B cell (primary cell): ENCODE measurements at regions of chr1 and their contacts with region 1.

Region 1: GRCh38 chr1:28248283-28249012 is 10.9 kb upstream of the SESN2 start:
- DNase-seq: peak; percentile 86
- ATAC-seq: peak; percentile 16
- H3K4me3 ChIP-seq: peak overlapping the region in 4 of 5 experiments; percentile 15 to 45 (median 38)
- H3K4me3 Mint-ChIP-seq: peak overlapping the region; percentile 83
- H3K27ac ChIP-seq: peak overlapping the region; percentile 74 to 77
- H3K27ac Mint-ChIP-seq: peak overlapping the region; percentile 88
- H3K4me1 ChIP-seq: peaks cover 43 to 51% of the 10 kb centered on the region in 2 donors
- H3K4me1 Mint-ChIP-seq: peaks cover 49% of the 10 kb centered on the region
- H3K27me3 ChIP-seq: no peaks in the 10 kb centered on the region
- H3K27me3 Mint-ChIP-seq: no peaks in the 10 kb centered on the region
- CTCF ChIP-seq: peak; percentile 86

Region 2: GRCh38 chr1:28329395-28330153 is 81.1 kb after region 1 on chr1:
- CTCF ChIA-PET with region 1: interaction called, 53 read pairs
- POLR2A ChIA-PET with region 1: interaction called, 11 read pairs
- intact Hi-C with region 1: loop called (anchors 1 kb)
- DNase-seq: peak; percentile 67
- ATAC-seq: no peak
- H3K4me3 ChIP-seq: peak overlapping the region; percentile 72 to 93 (median 80)
- H3K4me3 Mint-ChIP-seq: peak overlapping the region; percentile 91
- H3K27ac ChIP-seq: peak overlapping the region; percentile 91 to 99
- H3K27ac Mint-ChIP-seq: peak overlapping the region; percentile 99
- H3K4me1 ChIP-seq: peaks cover 34 to 41% of the 10 kb centered on the region in 2 donors
- H3K4me1 Mint-ChIP-seq: peaks cover 45% of the 10 kb centered on the region
- H3K27me3 ChIP-seq: no peaks in the 10 kb centered on the region
- H3K27me3 Mint-ChIP-seq: no peaks in the 10 kb centered on the region
- CTCF ChIP-seq: no peak

Region 3: GRCh38 chr1:28412731-28413130 is 164.3 kb after region 1 on chr1:
- CTCF ChIA-PET with region 1: interaction called, 14 read pairs
- POLR2A ChIA-PET with region 1: no interaction called
- intact Hi-C with region 1: no loop called
- DNase-seq: no peak
- ATAC-seq: no peak
- H3K4me3 ChIP-seq: no peak overlapping the region
- H3K4me3 Mint-ChIP-seq: no peak overlapping the region
- H3K27ac ChIP-seq: no peak overlapping the region
- H3K27ac Mint-ChIP-seq: no peak overlapping the region
- H3K4me1 ChIP-seq: peaks cover 2 to 6% of the 10 kb centered on the region in 2 donors
- H3K4me1 Mint-ChIP-seq: peaks cover 13% of the 10 kb centered on the region
- H3K27me3 ChIP-seq: no peaks in the 10 kb centered on the region
- H3K27me3 Mint-ChIP-seq: no peaks in the 10 kb centered on the region
- CTCF ChIP-seq: no peak

Region 4: GRCh38 chr1:28602536-28603439 is 354.3 kb after region 1 on chr1:
- CTCF ChIA-PET with region 1: interaction called, 25 read pairs
- POLR2A ChIA-PET with region 1: no interaction called
- intact Hi-C with region 1: no loop called
- DNase-seq: peak; percentile 57
- ATAC-seq: peak; percentile 28
- H3K4me3 ChIP-seq: no peak overlapping the region
- H3K4me3 Mint-ChIP-seq: no peak overlapping the region
- H3K27ac ChIP-seq: no peak overlapping the region
- H3K27ac Mint-ChIP-seq: no peak overlapping the region
- H3K4me1 ChIP-seq: no peaks in the 10 kb centered on the region
- H3K4me1 Mint-ChIP-seq: no peaks in the 10 kb centered on the region
- H3K27me3 ChIP-seq: no peaks in the 10 kb centered on the region
- H3K27me3 Mint-ChIP-seq: no peaks in the 10 kb centered on the region
- CTCF ChIP-seq: peak; percentile 45

Region 5: GRCh38 chr1:28736450-28737306 is 488.2 kb after region 1 on chr1 and contains the start of gene YTHDF2:
- CTCF ChIA-PET with region 1: no interaction called
- POLR2A ChIA-PET with region 1: no interaction called
- intact Hi-C with region 1: loop called (anchors 5 kb)
- DNase-seq: peak; percentile 99
- ATAC-seq: peak; percentile 91
- H3K4me3 ChIP-seq: peak within 1 kb of the TSS; percentile 75 to 91 (median 84)
- H3K4me3 Mint-ChIP-seq: peak within 1 kb of the TSS; percentile 95
- H3K27ac ChIP-seq: peak within 1 kb of the TSS; percentile 92 to 94
- H3K27ac Mint-ChIP-seq: peak within 1 kb of the TSS; percentile 95
- H3K4me1 ChIP-seq: peaks cover 16 to 23% of the 10 kb centered on the region in 2 donors
- H3K4me1 Mint-ChIP-seq: peaks cover 39% of the 10 kb centered on the region
- H3K27me3 ChIP-seq: no peaks in the 10 kb centered on the region
- H3K27me3 Mint-ChIP-seq: no peaks in the 10 kb centered on the region
- CTCF ChIP-seq: peak; percentile 91
- total RNA-seq, gene YTHDF2: 58.8 and 73.0 TPM in 2 replicates